K562 (cell line): ENCODE measurements at regions of chr16 and their contacts with region 1.

Region 1: GRCh38 chr16:641302-642188 is at the start of gene MCRIP2:
- DNase-seq: peak; percentile 88 to 94 (median 92)
- ATAC-seq: peak; percentile 86
- H3K4me3 ChIP-seq: peak within 1 kb of the TSS; percentile 89
- H3K27ac ChIP-seq: peak within 1 kb of the TSS; percentile 94
- H3K4me1 ChIP-seq: peaks cover 15 to 81% of the 10 kb centered on the region in 2 experiments; a peak in 4 of 5 replicates
- H3K27me3 ChIP-seq: no peaks in the 10 kb centered on the region
- CTCF ChIP-seq: no peak
- EP300 ChIP-seq: no peak; the same call in 1 of the 2 replicates
- POLR2A ChIP-seq: peak; percentile 80
- RAD21 ChIP-seq: no peak
- polyA plus RNA-seq, gene MCRIP2: 0.80 to 3.5 TPM

Region 2: GRCh38 chr16:589658-590159 is 51.8 kb before region 1 on chr16 and contains the start of gene RAB40C:
- CTCF ChIA-PET with region 1: no interaction called
- POLR2A ChIA-PET with region 1: interaction called, 6 read pairs
- in situ Hi-C with region 1: no loop called
- intact Hi-C with region 1: loop called (anchors 1 kb)
- DNase-seq: peak; percentile 95 to 99 (median 98)
- ATAC-seq: peak; percentile 90
- H3K4me3 ChIP-seq: peak within 1 kb of the TSS; percentile 90
- H3K27ac ChIP-seq: peak within 1 kb of the TSS; percentile 91
- H3K4me1 ChIP-seq: peaks cover 18 to 72% of the 10 kb centered on the region in 2 experiments; a peak in 4 of 5 replicates
- H3K27me3 ChIP-seq: no peaks in the 10 kb centered on the region
- CTCF ChIP-seq: peak in 2 of 3 experiments; percentile 39 to 40; a peak in 3 of 6 replicates
- EP300 ChIP-seq: no peak; the same call in 1 of the 2 replicates
- POLR2A ChIP-seq: peak; percentile 55; the same call in 1 of the 2 replicates
- RAD21 ChIP-seq: no peak
- polyA plus RNA-seq, gene RAB40C: 0.17 to 0.50 TPM

Region 3: GRCh38 chr16:651844-652243 is 10.3 kb after region 1 on chr16:
- CTCF ChIA-PET with region 1: no interaction called
- POLR2A ChIA-PET with region 1: interaction called, 13 read pairs
- in situ Hi-C with region 1: no loop called
- intact Hi-C with region 1: no loop called
- DNase-seq: no peak
- ATAC-seq: no peak
- H3K4me3 ChIP-seq: no peak overlapping the region
- H3K27ac ChIP-seq: no peak overlapping the region
- H3K4me1 ChIP-seq: peaks cover 0 to 88% of the 10 kb centered on the region in 2 experiments; a peak in 2 of 5 replicates
- H3K27me3 ChIP-seq: no peaks in the 10 kb centered on the region
- CTCF ChIP-seq: no peak
- EP300 ChIP-seq: no peak
- POLR2A ChIP-seq: no peak
- RAD21 ChIP-seq: no peak

Region 4: DNA sequence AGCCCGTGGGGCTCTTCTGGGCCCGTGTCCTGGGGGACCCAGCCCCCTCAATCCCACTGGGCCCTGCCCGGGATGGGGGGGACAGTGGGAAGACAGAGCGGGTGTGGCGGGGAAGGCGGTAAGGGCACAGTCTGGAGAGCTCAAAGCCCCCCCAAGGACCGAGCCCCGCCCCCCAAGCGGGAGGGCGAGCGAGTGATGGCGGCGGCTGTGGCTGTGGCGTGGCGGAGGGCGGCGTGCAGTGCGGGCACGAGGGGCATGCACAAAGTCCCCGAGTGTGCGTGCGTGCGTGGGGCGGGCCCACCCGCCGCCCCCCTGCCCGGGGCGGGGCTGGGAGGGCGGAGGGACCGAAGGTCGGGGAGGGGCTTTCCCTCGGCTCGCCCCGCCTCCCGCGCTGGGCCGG is 52.2 kb after region 1 on chr16:
- CTCF ChIA-PET with region 1: no interaction called
- POLR2A ChIA-PET with region 1: no interaction called
- in situ Hi-C with region 1: no loop called
- intact Hi-C with region 1: no loop called
- DNase-seq: peak in 2 of 4 experiments; percentile 40 to 42
- ATAC-seq: no peak
- H3K4me3 ChIP-seq: no peak overlapping the region; the same call in 1 of the 2 replicates
- H3K27ac ChIP-seq: no peak overlapping the region
- H3K4me1 ChIP-seq: peaks cover 12 to 67% of the 10 kb centered on the region in 2 experiments
- H3K27me3 ChIP-seq: peaks cover 2 to 7% of the 10 kb centered on the region in 2 experiments; a peak in 2 of 5 replicates
- CTCF ChIP-seq: no peak
- EP300 ChIP-seq: no peak
- POLR2A ChIP-seq: no peak
- RAD21 ChIP-seq: no peak

Region 5: GRCh38 chr16:1152651-1153259 is 511.2 kb after region 1 on chr16 and contains the start of gene CACNA1H:
- CTCF ChIA-PET with region 1: no interaction called
- POLR2A ChIA-PET with region 1: no interaction called
- in situ Hi-C with region 1: no loop called
- intact Hi-C with region 1: no loop called
- DNase-seq: peak; percentile 63 to 96 (median 94)
- ATAC-seq: peak; percentile 67
- H3K4me3 ChIP-seq: peak within 1 kb of the TSS; percentile 34
- H3K27ac ChIP-seq: no peak within 1 kb of the TSS
- H3K4me1 ChIP-seq: peaks cover 0 to 81% of the 10 kb centered on the region in 2 experiments; a peak in 2 of 5 replicates
- H3K27me3 ChIP-seq: peaks cover 20 to 65% of the 10 kb centered on the region in 2 experiments
- CTCF ChIP-seq: peak in 2 of 3 experiments; percentile 8 to 43; a peak in 3 of 6 replicates
- EP300 ChIP-seq: no peak
- POLR2A ChIP-seq: no peak
- RAD21 ChIP-seq: no peak
- polyA plus RNA-seq, gene CACNA1H: not detected